Upper lobe of right lung (tissue), 1 donor: ENCODE measurements at regions of chr1 and their contacts with region 1.

Region 1: GRCh38 chr1:154870115-154870571 is at the start of gene KCNN3:
- DNase-seq: peak; percentile 95
- ATAC-seq: peak; percentile 98
- H3K4me3 ChIP-seq: peak within 1 kb of the TSS; percentile 49
- H3K27ac ChIP-seq: peak within 1 kb of the TSS; percentile 51
- H3K4me1 ChIP-seq: peaks cover 7% of the 10 kb centered on the region
- H3K27me3 ChIP-seq: no peaks in the 10 kb centered on the region
- CTCF ChIP-seq: no peak
- total RNA-seq, gene KCNN3: 7.6 TPM

Region 2: GRCh38 chr1:154559466-154560088 is 310.6 kb before region 1 on chr1:
- intact Hi-C with region 1: loop called (anchors 10 kb)
- DNase-seq: peak; percentile 84
- ATAC-seq: peak; percentile 77
- H3K4me3 ChIP-seq: peak overlapping the region; percentile 61
- H3K27ac ChIP-seq: peak overlapping the region; percentile 79
- H3K4me1 ChIP-seq: peaks cover 25% of the 10 kb centered on the region
- H3K27me3 ChIP-seq: no peaks in the 10 kb centered on the region
- CTCF ChIP-seq: peak; percentile 94

Region 3: GRCh38 chr1:154669464-154670282 is 200.5 kb before region 1 on chr1:
- intact Hi-C with region 1: loop called (anchors 10 kb)
- DNase-seq: peak; percentile 81
- ATAC-seq: peak; percentile 100
- H3K4me3 ChIP-seq: no peak overlapping the region
- H3K27ac ChIP-seq: no peak overlapping the region
- H3K4me1 ChIP-seq: no peaks in the 10 kb centered on the region
- H3K27me3 ChIP-seq: no peaks in the 10 kb centered on the region
- CTCF ChIP-seq: peak; percentile 76

Region 4: DNA sequence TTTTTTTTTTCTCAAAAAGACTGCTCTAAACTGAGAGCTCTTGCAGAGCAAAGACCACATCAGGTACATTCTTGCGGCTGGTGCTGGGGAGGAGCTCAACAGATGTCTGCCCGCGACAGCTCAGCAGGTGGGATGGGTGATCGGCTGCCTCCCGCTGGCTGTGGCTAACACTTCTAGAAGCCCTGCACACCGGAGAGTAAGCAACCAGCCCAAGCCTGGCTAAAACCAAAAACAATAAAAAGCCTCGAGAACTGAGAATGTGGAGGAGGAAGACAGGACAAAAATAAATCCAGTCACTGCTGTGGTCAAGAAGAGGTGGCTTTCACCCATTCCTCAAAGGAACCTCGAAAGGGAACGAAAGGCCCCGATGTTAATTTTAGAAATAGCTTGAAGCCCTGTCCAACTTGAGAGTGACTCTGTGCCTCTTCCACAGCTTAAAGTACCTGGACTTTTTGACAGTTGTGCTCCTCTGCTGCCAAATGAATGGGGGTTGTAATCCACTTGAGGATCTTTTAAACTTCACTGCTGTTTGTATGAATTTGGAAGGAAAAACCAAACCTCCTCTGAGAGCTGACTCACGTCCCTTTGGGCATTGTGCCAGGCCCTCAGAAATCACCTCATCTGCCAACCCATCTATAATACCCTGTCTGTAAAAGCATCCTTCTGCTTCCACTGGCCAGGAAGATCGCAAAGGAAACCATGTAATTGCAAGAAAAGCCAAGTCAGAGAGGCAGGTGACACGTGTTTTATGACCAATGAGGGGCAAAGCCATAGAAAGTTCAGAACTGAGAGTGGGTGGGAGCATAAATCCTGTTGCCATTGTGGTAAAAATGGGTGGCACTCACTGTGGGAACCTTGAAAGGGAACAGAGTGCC is 78.6 kb before region 1 on chr1:
- intact Hi-C with region 1: no loop called
- DNase-seq: no peak
- ATAC-seq: peak; percentile 36
- H3K4me3 ChIP-seq: no peak overlapping the region
- H3K27ac ChIP-seq: no peak overlapping the region
- H3K4me1 ChIP-seq: no peaks in the 10 kb centered on the region
- H3K27me3 ChIP-seq: no peaks in the 10 kb centered on the region
- CTCF ChIP-seq: no peak

Region 5: DNA sequence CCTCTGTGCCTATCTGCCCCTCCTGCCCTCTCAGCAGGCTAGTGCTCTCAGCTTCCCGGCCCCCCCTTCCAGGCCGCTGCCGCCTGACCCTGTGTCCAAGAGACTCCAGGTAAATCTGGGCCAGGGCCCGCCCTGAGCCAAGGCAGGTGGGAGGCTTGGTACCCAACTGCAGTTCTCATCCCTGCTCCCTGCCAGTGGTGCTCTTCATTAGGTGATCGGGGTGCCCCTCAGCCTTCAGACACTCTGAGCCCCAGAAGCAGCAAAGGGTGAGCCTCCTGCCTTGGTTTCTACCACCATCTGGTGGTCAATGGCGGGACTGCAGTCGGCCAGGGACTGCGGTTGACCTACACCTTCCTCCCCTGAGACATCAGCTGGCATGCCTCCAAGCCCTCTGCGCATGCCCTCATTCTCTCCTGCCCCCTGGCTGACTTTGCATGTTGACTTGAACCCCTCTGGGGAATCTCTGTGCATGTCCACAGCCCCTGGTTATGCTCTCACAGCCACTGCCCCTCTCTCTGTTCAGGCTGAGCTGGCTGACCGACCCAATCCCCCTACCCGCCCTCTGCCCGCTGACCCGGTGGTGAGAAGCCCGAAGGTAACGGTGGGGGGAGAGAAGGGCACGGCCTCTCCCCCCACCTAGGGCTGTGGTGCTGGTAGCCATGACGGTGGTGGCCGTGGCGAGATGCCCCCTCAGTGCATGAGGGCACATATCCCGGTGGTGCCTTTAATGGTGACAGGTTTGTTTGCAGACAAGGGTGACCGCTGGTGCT is 191.4 kb after region 1 on chr1:
- intact Hi-C with region 1: no loop called
- DNase-seq: peak; percentile 92
- ATAC-seq: peak; percentile 75
- H3K4me3 ChIP-seq: no peak overlapping the region
- H3K27ac ChIP-seq: no peak overlapping the region
- H3K4me1 ChIP-seq: peaks cover 23% of the 10 kb centered on the region
- H3K27me3 ChIP-seq: no peaks in the 10 kb centered on the region
- CTCF ChIP-seq: peak; percentile 99